HEK293T (cell line): ENCODE measurements at regions of chr3 and their contacts with region 1.

Region 1: GRCh38 chr3:134794950-134795745 is at the start of gene EPHB1:
- DNase-seq: peak; percentile 91

Region 2: DNA sequence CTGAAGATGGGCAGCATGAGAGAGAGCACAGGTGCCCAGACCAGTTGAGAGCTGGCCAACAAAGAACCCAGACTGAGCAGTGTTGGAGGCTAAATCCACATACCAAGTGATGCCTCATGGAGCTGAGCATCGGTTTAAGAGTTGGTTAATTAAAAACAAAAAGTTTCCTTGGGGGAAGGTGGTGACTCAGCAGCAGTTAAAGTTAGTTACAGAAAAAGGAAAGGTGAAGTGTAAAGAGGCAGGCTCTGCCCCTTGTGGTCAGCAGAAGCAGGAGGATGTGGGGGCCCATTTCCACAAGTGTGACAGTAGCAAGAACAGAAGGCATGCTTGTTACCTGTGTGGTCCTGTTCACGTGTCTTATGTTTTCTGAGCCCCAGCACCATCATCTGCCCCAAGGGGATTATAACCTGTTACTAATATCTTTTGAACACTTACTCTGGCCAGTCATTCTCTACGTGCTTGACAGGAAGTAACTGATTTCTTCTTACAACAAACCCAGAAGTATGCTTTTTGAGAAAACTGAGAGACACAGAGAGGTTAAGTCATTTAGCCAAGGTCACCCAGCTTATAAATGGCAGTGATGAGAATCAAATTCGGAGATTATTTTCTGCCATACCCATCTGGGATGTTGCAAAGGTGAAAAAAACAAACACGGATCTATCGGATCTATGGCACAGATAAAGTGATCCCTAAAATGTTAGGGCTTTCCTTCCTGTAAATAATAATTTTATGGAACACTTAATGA is 90.9 kb after region 1 on chr3:
- CTCF ChIA-PET with region 1: no interaction called
- POLR2A ChIA-PET with region 1: no interaction called
- DNase-seq: no peak

Region 3: GRCh38 chr3:135503760-135504686 is 708.9 kb after region 1 on chr3:
- CTCF ChIA-PET with region 1: interaction called, 10 read pairs
- POLR2A ChIA-PET with region 1: no interaction called
- DNase-seq: peak; percentile 78